ENCODE measurements at regions of chr19 and their contacts with region 1.

Region 1: DNA sequence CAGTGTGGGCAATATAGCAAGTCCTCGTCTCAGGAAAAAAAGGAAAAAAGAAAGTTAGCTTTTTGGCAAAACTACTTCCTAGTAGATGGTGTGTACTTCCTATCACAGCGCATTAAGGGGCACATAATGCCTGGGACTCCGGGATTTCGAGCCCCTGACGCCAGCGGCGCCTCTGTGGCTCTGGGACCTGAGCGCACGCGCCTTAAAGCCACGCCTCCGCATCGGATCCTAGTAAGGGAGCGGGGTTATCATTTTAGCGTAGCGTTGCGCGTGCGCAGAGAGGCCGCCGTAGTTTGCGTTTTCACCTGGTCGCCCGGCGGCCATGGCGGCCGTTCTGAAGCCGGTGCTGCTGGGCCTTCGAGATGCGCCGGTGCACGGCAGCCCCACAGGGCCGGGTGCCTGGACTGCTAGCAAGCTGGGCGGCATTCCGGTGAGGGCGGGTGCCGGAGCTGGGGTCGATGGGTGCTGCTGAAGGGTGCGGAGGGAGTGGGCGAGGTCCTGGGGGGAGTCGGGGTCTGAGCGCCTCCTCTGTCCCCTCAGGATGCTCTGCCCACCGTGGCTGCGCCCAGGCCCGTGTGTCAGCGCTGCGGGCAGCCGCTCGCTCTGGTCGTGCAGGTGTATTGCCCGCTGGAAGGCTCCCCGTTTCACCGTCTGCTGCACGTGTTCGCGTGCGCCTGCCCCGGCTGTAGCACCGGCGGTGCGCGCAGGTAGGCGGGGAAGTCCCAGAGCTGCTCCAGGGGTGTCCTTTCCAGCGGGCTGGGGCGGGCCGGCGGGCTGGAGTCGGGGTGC is at the start of gene PDCD2L:
- DNase-seq: peak; percentile 86
- ATAC-seq: peak; percentile 98
- H3K4me3 Mint-ChIP-seq: peak within 1 kb of the TSS; percentile 91
- H3K27ac Mint-ChIP-seq: peak within 1 kb of the TSS; percentile 85
- H3K4me1 Mint-ChIP-seq: peaks cover 22% of the 10 kb centered on the region
- H3K27me3 Mint-ChIP-seq: no peaks in the 10 kb centered on the region
- CTCF ChIP-seq: no peak
- total RNA-seq, gene PDCD2L: 13.4 and 18.6 TPM in 2 replicates

Region 2: GRCh38 chr19:34359140-34359953 is 45.0 kb before region 1 on chr19:
- CTCF ChIA-PET with region 1: no interaction called
- POLR2A ChIA-PET with region 1: no interaction called
- intact Hi-C with region 1: loop called (anchors 1 kb)
- DNase-seq: peak; percentile 97
- ATAC-seq: peak; percentile 93
- H3K4me3 Mint-ChIP-seq: peak overlapping the region; percentile 92
- H3K27ac Mint-ChIP-seq: peak overlapping the region; percentile 95
- H3K4me1 Mint-ChIP-seq: peaks cover 26% of the 10 kb centered on the region
- H3K27me3 Mint-ChIP-seq: no peaks in the 10 kb centered on the region
- CTCF ChIP-seq: no peak

Region 3: DNA sequence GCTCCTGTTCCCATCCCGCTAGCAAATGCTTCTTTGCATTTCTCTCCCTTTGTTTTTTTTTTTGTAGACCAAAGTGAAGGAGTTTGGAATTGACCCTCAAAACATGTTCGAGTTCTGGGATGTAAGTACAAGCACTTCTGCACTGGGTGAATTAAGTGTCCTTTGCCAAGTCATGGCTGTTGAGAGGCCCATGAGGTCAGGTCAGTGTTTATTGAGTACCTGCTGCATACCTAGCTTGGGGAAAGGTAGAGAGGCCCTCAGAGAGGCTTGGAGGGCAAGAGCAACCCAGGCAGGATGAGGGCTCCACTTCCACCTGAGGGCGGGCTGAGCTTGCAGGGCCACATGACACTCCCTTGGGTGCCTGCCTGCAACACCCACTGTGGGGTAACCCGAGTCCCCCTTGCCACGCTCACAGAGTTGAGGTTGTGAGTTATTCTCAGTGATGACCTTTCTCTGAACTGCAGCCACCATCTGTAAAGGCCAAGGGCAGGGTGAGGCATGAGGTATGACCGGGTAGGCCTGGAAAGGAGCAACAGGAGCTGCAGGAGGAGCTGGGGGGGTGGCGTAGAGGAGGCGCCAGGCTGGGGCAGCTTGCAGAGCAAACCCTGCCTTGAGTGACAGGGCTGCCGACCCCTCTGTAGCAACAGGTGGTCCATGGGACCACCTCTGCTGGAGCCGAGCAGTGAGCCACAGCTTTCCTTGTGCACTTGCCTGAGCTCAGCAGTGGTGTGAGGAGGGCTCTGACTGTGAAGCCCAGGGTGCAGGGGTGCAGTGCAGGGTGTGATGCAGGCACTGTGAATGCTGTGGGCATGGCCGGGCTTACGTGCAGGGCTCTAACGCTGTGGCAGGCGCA is 22.7 kb before region 1 on chr19:
- CTCF ChIA-PET with region 1: no interaction called
- POLR2A ChIA-PET with region 1: no interaction called
- intact Hi-C with region 1: no loop called
- DNase-seq: no peak
- ATAC-seq: no peak
- H3K4me3 Mint-ChIP-seq: no peak overlapping the region
- H3K27ac Mint-ChIP-seq: no peak overlapping the region
- H3K4me1 Mint-ChIP-seq: no peaks in the 10 kb centered on the region
- H3K27me3 Mint-ChIP-seq: no peaks in the 10 kb centered on the region
- CTCF ChIP-seq: no peak

Measured in activated B cell treated with CpG ODN at 0.5 μM for 24 hours (primary cell).